ENCODE measurements at regions of chr5 and their contacts with region 1.

Region 1: DNA sequence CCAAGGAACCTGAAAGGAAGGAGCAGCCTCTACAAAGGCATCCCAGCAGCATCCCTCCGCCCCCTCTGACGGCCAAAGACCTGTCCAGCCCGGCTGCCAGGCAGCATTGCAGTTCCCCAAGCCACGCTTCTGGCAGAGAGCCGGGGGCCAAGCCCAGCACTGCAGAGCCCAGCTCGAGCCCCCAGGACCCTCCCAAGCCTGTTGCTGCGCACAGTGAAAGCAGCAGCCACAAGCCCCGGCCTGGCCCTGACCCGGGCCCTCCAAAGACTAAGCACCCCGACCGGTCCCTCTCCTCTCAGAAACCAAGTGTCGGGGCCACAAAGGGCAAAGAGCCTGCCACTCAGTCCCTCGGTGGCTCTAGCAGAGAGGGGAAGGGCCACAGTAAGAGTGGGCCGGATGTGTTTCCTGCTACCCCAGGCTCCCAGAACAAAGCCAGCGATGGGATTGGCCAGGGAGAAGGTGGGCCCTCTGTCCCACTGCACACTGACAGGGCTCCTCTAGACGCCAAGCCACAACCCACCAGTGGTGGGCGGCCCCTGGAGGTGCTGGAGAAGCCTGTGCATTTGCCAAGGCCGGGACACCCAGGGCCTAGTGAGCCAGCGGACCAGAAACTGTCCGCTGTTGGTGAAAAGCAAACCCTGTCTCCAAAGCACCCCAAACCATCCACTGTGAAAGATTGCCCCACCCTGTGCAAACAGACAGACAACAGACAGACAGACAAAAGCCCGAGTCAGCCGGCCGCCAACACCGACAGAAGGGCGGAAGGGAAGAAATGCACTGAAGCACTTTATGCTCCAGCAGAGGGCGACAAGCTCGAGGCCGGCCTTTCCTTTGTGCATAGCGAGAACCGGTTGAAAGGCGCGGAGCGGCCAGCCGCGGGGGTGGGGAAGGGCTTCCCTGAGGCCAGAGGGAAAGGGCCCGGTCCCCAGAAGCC is 30.8 kb downstream of the CD180 start:
- DNase-seq: peak; percentile 65 to 91 (median 80)
- ATAC-seq: peak; percentile 69
- H3K4me3 ChIP-seq: peak overlapping the region; percentile 56
- H3K4me3 Mint-ChIP-seq: peak overlapping the region; percentile 88
- H3K27ac ChIP-seq: peak overlapping the region; percentile 83 to 88
- H3K27ac Mint-ChIP-seq: peak overlapping the region; percentile 97
- H3K4me1 ChIP-seq: peaks cover 73% of the 10 kb centered on the region
- H3K4me1 Mint-ChIP-seq: peaks cover 71% of the 10 kb centered on the region
- H3K27me3 ChIP-seq: no peaks in the 10 kb centered on the region
- H3K27me3 Mint-ChIP-seq: no peaks in the 10 kb centered on the region
- CTCF ChIP-seq: peak; percentile 73

Region 2: DNA sequence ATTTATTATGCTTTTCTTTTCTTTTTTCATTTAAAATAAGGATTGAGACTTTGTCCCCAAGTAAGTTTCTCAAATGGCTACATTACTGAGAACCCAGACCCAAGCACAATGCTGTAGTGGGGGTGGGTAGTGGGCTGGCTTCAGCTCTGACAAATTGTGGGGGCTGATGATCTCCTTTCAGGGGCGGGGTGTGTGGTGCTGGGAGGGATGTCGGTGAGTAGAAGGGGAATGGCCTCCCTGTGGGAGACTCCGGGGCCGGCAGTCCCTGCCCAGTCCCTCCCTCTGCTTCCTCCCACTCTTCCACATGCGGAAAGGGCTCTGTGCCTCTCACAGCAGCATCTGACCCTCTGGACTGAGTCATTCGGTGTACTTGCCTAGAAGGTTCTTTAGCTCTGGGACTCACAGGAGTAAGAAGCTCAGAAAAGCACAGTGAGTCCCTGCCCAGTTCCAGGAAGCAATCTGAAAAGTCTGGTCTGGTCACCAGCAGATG is 16.6 kb after region 1 on chr5:
- CTCF ChIA-PET with region 1: interaction called, 3 read pairs
- POLR2A ChIA-PET with region 1: interaction called, 10 read pairs
- intact Hi-C with region 1: no loop called
- DNase-seq: peak in 1 of 14 experiments; percentile 58
- ATAC-seq: no peak
- H3K4me3 ChIP-seq: no peak overlapping the region
- H3K4me3 Mint-ChIP-seq: no peak overlapping the region
- H3K27ac ChIP-seq: peak overlapping the region in 1 of 2 donors; percentile 44
- H3K27ac Mint-ChIP-seq: peak overlapping the region; percentile 58
- H3K4me1 ChIP-seq: peaks cover 29% of the 10 kb centered on the region
- H3K4me1 Mint-ChIP-seq: peaks cover 54% of the 10 kb centered on the region
- H3K27me3 ChIP-seq: no peaks in the 10 kb centered on the region
- H3K27me3 Mint-ChIP-seq: no peaks in the 10 kb centered on the region
- CTCF ChIP-seq: no peak

Region 3: DNA sequence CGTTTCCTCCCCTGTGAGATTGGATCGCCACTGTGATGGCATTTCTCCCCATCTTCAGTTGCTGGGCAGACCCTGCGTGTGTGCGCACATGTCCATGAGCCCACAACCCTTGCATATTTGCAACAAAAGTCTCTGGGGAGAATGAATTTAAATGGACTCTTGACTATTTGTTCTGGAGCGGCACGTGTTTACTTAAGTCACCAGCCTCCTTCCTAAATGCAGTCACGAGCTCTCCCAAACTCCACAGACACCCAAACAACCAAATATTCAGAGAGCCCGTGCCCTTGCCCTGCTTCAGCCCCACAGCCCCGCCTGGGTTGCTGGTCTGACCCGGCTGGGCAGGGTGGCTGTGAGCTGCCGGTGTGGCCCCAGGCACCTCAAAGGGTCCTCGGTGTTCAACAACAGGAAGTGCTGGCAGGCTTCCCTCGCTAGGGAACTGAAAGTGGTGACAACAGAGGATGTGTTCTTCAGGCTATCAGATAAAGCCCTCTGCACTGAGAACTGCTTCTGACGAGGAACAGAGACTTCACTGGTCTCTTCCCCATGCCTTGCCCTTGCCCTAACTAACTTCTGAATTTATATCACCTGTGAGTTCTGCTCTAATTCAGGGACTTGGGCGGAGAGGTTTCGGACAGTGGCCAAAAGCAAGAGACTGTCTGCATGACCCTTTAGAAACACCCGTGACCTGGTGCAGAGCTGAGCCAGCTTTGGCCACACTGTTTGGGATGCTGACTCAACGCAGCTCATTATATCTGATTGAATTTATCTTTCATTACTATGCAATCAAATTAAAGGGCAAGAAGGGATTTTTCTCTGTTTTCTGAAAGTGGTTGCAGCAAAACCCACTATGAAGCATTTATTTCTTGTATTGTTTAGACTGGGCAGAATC is 50.0 kb after region 1 on chr5:
- CTCF ChIA-PET with region 1: interaction called, 4 read pairs
- POLR2A ChIA-PET with region 1: interaction called, 22 read pairs
- intact Hi-C with region 1: no loop called
- DNase-seq: peak; percentile 58 to 91 (median 73)
- ATAC-seq: peak; percentile 95
- H3K4me3 ChIP-seq: peak overlapping the region; percentile 22
- H3K4me3 Mint-ChIP-seq: peak overlapping the region; percentile 49
- H3K27ac ChIP-seq: peak overlapping the region; percentile 74 to 78
- H3K27ac Mint-ChIP-seq: peak overlapping the region; percentile 94
- H3K4me1 ChIP-seq: peaks cover 63% of the 10 kb centered on the region
- H3K4me1 Mint-ChIP-seq: peaks cover 63% of the 10 kb centered on the region
- H3K27me3 ChIP-seq: no peaks in the 10 kb centered on the region
- H3K27me3 Mint-ChIP-seq: no peaks in the 10 kb centered on the region
- CTCF ChIP-seq: no peak

Region 4: GRCh38 chr5:67221487-67222242 is 55.9 kb after region 1 on chr5:
- CTCF ChIA-PET with region 1: interaction called, 3 read pairs
- POLR2A ChIA-PET with region 1: interaction called, 11 read pairs
- intact Hi-C with region 1: no loop called
- DNase-seq: peak in 11 of 14 experiments; percentile 16 to 83 (median 39)
- ATAC-seq: peak; percentile 83
- H3K4me3 ChIP-seq: peak overlapping the region; percentile 7
- H3K4me3 Mint-ChIP-seq: peak overlapping the region; percentile 81
- H3K27ac ChIP-seq: peak overlapping the region; percentile 30 to 33
- H3K27ac Mint-ChIP-seq: peak overlapping the region; percentile 93
- H3K4me1 ChIP-seq: peaks cover 68% of the 10 kb centered on the region
- H3K4me1 Mint-ChIP-seq: peaks cover 68% of the 10 kb centered on the region
- H3K27me3 ChIP-seq: no peaks in the 10 kb centered on the region
- H3K27me3 Mint-ChIP-seq: no peaks in the 10 kb centered on the region
- CTCF ChIP-seq: no peak